Activated CD4-positive, alpha-beta memory T cell treated with anti-CD3 and anti-CD28 coated beads for 36 hours (primary cell): ENCODE measurements at regions of chr3 and their contacts with region 1.

Region 1: GRCh38 chr3:43378066-43378935 is 92.0 kb downstream of the SNRK start:
- DNase-seq: peak; percentile 77
- H3K4me3 Mint-ChIP-seq: no peak overlapping the region
- H3K27ac Mint-ChIP-seq: no peak overlapping the region
- H3K4me1 Mint-ChIP-seq: peaks cover 12% of the 10 kb centered on the region
- H3K27me3 Mint-ChIP-seq: no peaks in the 10 kb centered on the region

Region 2: DNA sequence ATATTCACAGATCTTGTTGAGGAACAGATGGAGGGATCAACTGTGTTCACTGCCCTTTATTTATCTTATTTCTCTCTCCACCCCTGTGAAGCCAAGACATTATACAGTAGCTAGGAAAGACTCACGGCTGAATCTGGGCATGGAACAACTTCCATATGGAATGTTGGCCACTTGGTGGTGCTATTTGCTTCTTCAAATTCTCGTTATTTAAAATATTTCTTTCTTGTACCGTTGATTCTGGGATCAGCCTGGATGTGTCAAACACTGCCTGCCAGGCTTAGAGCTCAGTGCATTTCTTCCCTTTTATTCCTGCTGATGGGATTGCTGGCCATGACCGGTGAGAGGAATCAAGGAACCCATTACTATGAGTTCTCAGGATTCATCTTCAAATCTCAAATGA is 416.7 kb before region 1 on chr3:
- CTCF ChIA-PET with region 1: interaction called, 6 read pairs
- POLR2A ChIA-PET with region 1: no interaction called
- intact Hi-C with region 1: loop called (anchors 5 kb)
- DNase-seq: peak; percentile 15
- H3K4me3 Mint-ChIP-seq: no peak overlapping the region
- H3K27ac Mint-ChIP-seq: no peak overlapping the region
- H3K4me1 Mint-ChIP-seq: peaks cover 11% of the 10 kb centered on the region
- H3K27me3 Mint-ChIP-seq: peaks cover 3% of the 10 kb centered on the region

Region 3: GRCh38 chr3:43162230-43163084 is 215.8 kb before region 1 on chr3:
- CTCF ChIA-PET with region 1: interaction called, 52 read pairs
- POLR2A ChIA-PET with region 1: no interaction called
- intact Hi-C with region 1: loop called (anchors 1 kb)
- DNase-seq: peak; percentile 60
- H3K4me3 Mint-ChIP-seq: peak overlapping the region; percentile 65
- H3K27ac Mint-ChIP-seq: peak overlapping the region; percentile 84
- H3K4me1 Mint-ChIP-seq: peaks cover 24% of the 10 kb centered on the region
- H3K27me3 Mint-ChIP-seq: no peaks in the 10 kb centered on the region

Region 4: DNA sequence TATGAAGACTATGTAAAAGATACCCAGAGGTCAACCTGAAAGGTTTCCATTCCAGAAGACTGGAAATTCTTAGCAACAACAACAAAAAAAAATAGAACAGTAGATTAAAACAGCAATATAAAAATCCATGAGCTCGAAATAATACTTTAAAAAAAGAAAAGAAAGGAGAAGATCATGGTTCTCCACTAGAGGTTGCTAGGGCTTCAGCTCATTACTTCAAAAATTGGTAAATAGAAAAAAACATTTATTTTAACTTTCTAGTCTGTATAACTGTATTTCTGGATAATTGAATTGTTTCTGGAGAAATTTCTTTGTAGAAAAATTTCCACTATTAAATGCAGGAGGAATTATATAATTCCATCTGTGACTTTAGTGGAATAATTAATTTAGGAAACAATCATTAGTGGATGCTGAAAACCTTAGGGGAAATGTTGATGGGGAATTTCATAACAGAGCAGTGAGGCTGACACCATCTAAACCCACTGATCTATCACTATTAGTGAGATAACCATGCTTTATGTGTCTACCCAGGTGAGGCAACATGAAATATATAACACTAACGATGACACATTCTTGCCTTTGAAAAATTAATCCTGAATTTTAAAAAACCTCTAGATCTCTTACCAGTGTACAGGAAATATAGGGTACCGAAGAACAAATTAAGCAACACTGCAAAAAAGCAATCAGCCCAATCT is 154.5 kb before region 1 on chr3:
- CTCF ChIA-PET with region 1: interaction called, 9 read pairs
- POLR2A ChIA-PET with region 1: no interaction called
- intact Hi-C with region 1: loop called (anchors 1 kb)
- DNase-seq: no peak
- H3K4me3 Mint-ChIP-seq: no peak overlapping the region
- H3K27ac Mint-ChIP-seq: no peak overlapping the region
- H3K4me1 Mint-ChIP-seq: peaks cover 45% of the 10 kb centered on the region
- H3K27me3 Mint-ChIP-seq: no peaks in the 10 kb centered on the region

Region 5: DNA sequence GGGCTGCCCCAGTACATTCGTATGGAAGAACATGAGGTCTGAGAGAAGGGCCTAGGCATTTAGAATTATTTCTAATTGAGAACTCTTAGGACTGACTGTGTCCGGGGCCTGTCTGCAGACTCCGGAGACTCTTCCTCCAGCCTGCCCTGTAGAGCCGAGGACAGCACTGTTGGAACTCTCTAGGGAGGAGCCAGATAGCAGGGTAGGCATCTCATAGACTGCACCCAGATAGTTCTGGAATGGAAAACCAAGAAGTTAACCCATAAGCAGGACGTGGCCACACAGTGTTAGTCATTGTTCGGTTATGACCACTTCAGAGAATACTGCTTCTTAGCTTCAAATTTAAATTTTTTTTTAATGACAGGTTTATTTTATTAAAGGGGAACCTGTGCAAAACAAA is 32.4 kb before region 1 on chr3:
- CTCF ChIA-PET with region 1: interaction called, 10 read pairs
- POLR2A ChIA-PET with region 1: no interaction called
- intact Hi-C with region 1: no loop called
- DNase-seq: peak; percentile 54
- H3K4me3 Mint-ChIP-seq: no peak overlapping the region
- H3K27ac Mint-ChIP-seq: peak overlapping the region; percentile 75
- H3K4me1 Mint-ChIP-seq: peaks cover 56% of the 10 kb centered on the region
- H3K27me3 Mint-ChIP-seq: no peaks in the 10 kb centered on the region